Dendritic cell treated with granulocyte-macrophage colony-stimulating factor and Interleukin-4, amounts not matched to agents 40 ng/mL and 50 ng/mL, for 4 days (primary cell): ENCODE measurements at regions of chr4 and their contacts with region 1.

Region 1: GRCh38 chr4:119212234-119212963 is at the start of gene USP53:
- H3K4me3 Mint-ChIP-seq: peak within 1 kb of the TSS; percentile 86
- H3K27ac Mint-ChIP-seq: peak within 1 kb of the TSS; percentile 80
- H3K4me1 Mint-ChIP-seq: peaks cover 43% of the 10 kb centered on the region
- H3K27me3 Mint-ChIP-seq: peaks cover 21% of the 10 kb centered on the region

Region 2: GRCh38 chr4:118918388-118918787 is 294.0 kb before region 1 on chr4:
- intact Hi-C with region 1: no loop called
- H3K4me3 Mint-ChIP-seq: no peak overlapping the region
- H3K27ac Mint-ChIP-seq: no peak overlapping the region
- H3K4me1 Mint-ChIP-seq: no peaks in the 10 kb centered on the region
- H3K27me3 Mint-ChIP-seq: peaks cover 3% of the 10 kb centered on the region

Region 3: GRCh38 chr4:119041951-119042560 is 170.3 kb before region 1 on chr4:
- intact Hi-C with region 1: loop called (anchors 2 kb)
- H3K4me3 Mint-ChIP-seq: no peak overlapping the region
- H3K27ac Mint-ChIP-seq: no peak overlapping the region
- H3K4me1 Mint-ChIP-seq: peaks cover 21% of the 10 kb centered on the region
- H3K27me3 Mint-ChIP-seq: no peaks in the 10 kb centered on the region

Region 4: DNA sequence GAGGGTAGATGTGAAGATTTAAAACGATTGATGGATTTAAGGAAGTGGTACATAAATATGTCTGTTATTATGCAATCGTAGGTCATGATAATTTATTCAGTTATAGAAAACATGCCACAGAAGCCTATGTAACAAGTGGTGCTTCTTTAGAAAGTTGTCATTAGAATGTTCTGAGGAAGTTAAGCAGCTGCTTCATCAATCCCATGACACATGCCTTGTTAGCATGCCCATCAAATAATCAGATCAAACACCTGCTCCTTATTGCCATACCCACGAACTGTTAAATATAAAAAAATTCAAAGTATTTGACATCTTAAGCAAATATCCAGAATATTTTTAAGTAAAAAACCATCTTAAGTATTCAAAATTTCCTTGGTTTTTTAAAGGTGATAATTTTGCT is 153.2 kb before region 1 on chr4:
- intact Hi-C with region 1: no loop called
- H3K4me3 Mint-ChIP-seq: no peak overlapping the region
- H3K27ac Mint-ChIP-seq: no peak overlapping the region
- H3K4me1 Mint-ChIP-seq: no peaks in the 10 kb centered on the region
- H3K27me3 Mint-ChIP-seq: no peaks in the 10 kb centered on the region